ENCODE measurements at regions of chr7 and their contacts with region 1.

Region 1: GRCh38 chr7:90312745-90313144 is 8.4 kb downstream of the FAM237B start:
- DNase-seq: no peak
- H3K4me3 ChIP-seq: no peak overlapping the region
- H3K27ac ChIP-seq: no peak overlapping the region
- H3K4me1 ChIP-seq: no peaks in the 10 kb centered on the region
- H3K27me3 ChIP-seq: no peaks in the 10 kb centered on the region
- CTCF ChIP-seq: no peak
- EP300 ChIP-seq: no peak
- POLR2A ChIP-seq: no peak

Region 2: GRCh38 chr7:90424720-90425119 is 112.0 kb after region 1 on chr7:
- intact Hi-C with region 1: loop called (anchors 10 kb)
- DNase-seq: no peak
- H3K4me3 ChIP-seq: no peak overlapping the region
- H3K27ac ChIP-seq: no peak overlapping the region
- H3K4me1 ChIP-seq: no peaks in the 10 kb centered on the region
- H3K27me3 ChIP-seq: no peaks in the 10 kb centered on the region
- CTCF ChIP-seq: no peak
- EP300 ChIP-seq: no peak
- POLR2A ChIP-seq: no peak

Region 3: GRCh38 chr7:90492250-90492649 is 179.5 kb after region 1 on chr7:
- intact Hi-C with region 1: no loop called
- DNase-seq: no peak
- H3K4me3 ChIP-seq: no peak overlapping the region
- H3K27ac ChIP-seq: no peak overlapping the region
- H3K4me1 ChIP-seq: no peaks in the 10 kb centered on the region
- H3K27me3 ChIP-seq: no peaks in the 10 kb centered on the region
- CTCF ChIP-seq: no peak
- EP300 ChIP-seq: no peak
- POLR2A ChIP-seq: no peak

Measured in sigmoid colon (tissue), 7 donors.